Caco-2 (cell line): ENCODE measurements at regions of chr5 and their contacts with region 1.

Region 1: GRCh38 chr5:104845541-104845940 is 1283.0 kb upstream of the NUDT12 start:
- DNase-seq: no peak
- H3K4me3 ChIP-seq: no peak overlapping the region
- H3K4me3 Mint-ChIP-seq: no peak overlapping the region
- H3K27ac Mint-ChIP-seq: no peak overlapping the region
- H3K4me1 ChIP-seq: peaks cover 9% of the 10 kb centered on the region; the same call in 1 of the 2 replicates
- H3K4me1 Mint-ChIP-seq: peaks cover 10% of the 10 kb centered on the region
- H3K27me3 ChIP-seq: no peaks in the 10 kb centered on the region
- H3K27me3 Mint-ChIP-seq: no peaks in the 10 kb centered on the region
- CTCF ChIP-seq: no peak

Region 2: DNA sequence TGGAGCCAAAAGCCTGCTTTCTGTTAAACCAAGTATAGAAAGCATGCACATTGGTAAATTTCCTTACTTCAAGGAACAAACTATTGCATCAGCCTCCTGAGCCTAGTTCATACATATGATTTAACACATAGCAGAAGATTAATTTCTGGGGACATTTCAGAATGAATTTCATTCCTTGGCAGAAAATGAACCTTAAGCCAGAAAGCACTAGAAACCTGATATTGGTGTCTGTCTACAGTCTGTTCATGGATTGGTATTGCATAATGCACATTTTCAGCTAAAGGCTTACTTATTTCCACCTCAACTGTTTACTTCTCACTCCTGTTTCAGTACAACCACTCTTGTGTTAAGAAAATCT is 188.8 kb after region 1 on chr5:
- CTCF ChIA-PET with region 1: no interaction called
- POLR2A ChIA-PET with region 1: no interaction called
- intact Hi-C with region 1: loop called (anchors 5 kb)
- DNase-seq: no peak
- H3K4me3 ChIP-seq: no peak overlapping the region
- H3K4me3 Mint-ChIP-seq: no peak overlapping the region
- H3K27ac Mint-ChIP-seq: peak overlapping the region; percentile 62
- H3K4me1 ChIP-seq: peaks cover 18% of the 10 kb centered on the region
- H3K4me1 Mint-ChIP-seq: peaks cover 16% of the 10 kb centered on the region
- H3K27me3 ChIP-seq: no peaks in the 10 kb centered on the region
- H3K27me3 Mint-ChIP-seq: no peaks in the 10 kb centered on the region
- CTCF ChIP-seq: no peak